T-cell (primary cell): ENCODE measurements at regions of chr4 and their contacts with region 1.

Region 1: GRCh38 chr4:74255096-74255495 is 53.2 kb upstream of the EPGN start:
- DNase-seq: no peak
- ATAC-seq: no peak
- H3K4me3 ChIP-seq: no peak overlapping the region
- H3K4me3 Mint-ChIP-seq: no peak overlapping the region
- H3K27ac ChIP-seq: no peak overlapping the region
- H3K27ac Mint-ChIP-seq: no peak overlapping the region
- H3K4me1 ChIP-seq: no peaks in the 10 kb centered on the region
- H3K4me1 Mint-ChIP-seq: no peaks in the 10 kb centered on the region
- H3K27me3 ChIP-seq: peaks cover 0 to 4% of the 10 kb centered on the region in 2 experiments
- H3K27me3 Mint-ChIP-seq: no peaks in the 10 kb centered on the region

Region 2: GRCh38 chr4:74133786-74134499 is 121.2 kb before region 1 on chr4:
- CTCF ChIA-PET with region 1: no interaction called
- POLR2A ChIA-PET with region 1: no interaction called
- DNase-seq: peak in 26 of 35 experiments; percentile 1 to 61 (median 13)
- ATAC-seq: no peak
- H3K4me3 ChIP-seq: no peak overlapping the region
- H3K4me3 Mint-ChIP-seq: no peak overlapping the region
- H3K27ac ChIP-seq: no peak overlapping the region
- H3K27ac Mint-ChIP-seq: no peak overlapping the region
- H3K4me1 ChIP-seq: no peaks in the 10 kb centered on the region
- H3K4me1 Mint-ChIP-seq: no peaks in the 10 kb centered on the region
- H3K27me3 ChIP-seq: peaks cover 0 to 6% of the 10 kb centered on the region in 2 experiments
- H3K27me3 Mint-ChIP-seq: peaks cover 9 to 25% of the 10 kb centered on the region in 2 donors

Region 3: GRCh38 chr4:74217365-74217764 is 37.7 kb before region 1 on chr4:
- CTCF ChIA-PET with region 1: interaction called in 1 of 2 experiments, 12 read pairs
- POLR2A ChIA-PET with region 1: no interaction called
- DNase-seq: no peak
- ATAC-seq: no peak
- H3K4me3 ChIP-seq: no peak overlapping the region
- H3K4me3 Mint-ChIP-seq: no peak overlapping the region
- H3K27ac ChIP-seq: no peak overlapping the region
- H3K27ac Mint-ChIP-seq: no peak overlapping the region
- H3K4me1 ChIP-seq: no peaks in the 10 kb centered on the region
- H3K4me1 Mint-ChIP-seq: peaks cover 4 to 12% (median 5%) of the 10 kb centered on the region in 3 donors
- H3K27me3 ChIP-seq: no peaks in the 10 kb centered on the region
- H3K27me3 Mint-ChIP-seq: no peaks in the 10 kb centered on the region

Region 4: GRCh38 chr4:74283614-74284013 is 28.5 kb after region 1 on chr4:
- CTCF ChIA-PET with region 1: no interaction called
- POLR2A ChIA-PET with region 1: no interaction called
- DNase-seq: no peak
- ATAC-seq: no peak
- H3K4me3 ChIP-seq: no peak overlapping the region
- H3K4me3 Mint-ChIP-seq: no peak overlapping the region
- H3K27ac ChIP-seq: no peak overlapping the region
- H3K27ac Mint-ChIP-seq: no peak overlapping the region
- H3K4me1 ChIP-seq: no peaks in the 10 kb centered on the region
- H3K4me1 Mint-ChIP-seq: no peaks in the 10 kb centered on the region
- H3K27me3 ChIP-seq: no peaks in the 10 kb centered on the region
- H3K27me3 Mint-ChIP-seq: no peaks in the 10 kb centered on the region